Endothelial cell of umbilical vein (primary cell): ENCODE measurements at regions of chr11 and their contacts with region 1.

Region 1: DNA sequence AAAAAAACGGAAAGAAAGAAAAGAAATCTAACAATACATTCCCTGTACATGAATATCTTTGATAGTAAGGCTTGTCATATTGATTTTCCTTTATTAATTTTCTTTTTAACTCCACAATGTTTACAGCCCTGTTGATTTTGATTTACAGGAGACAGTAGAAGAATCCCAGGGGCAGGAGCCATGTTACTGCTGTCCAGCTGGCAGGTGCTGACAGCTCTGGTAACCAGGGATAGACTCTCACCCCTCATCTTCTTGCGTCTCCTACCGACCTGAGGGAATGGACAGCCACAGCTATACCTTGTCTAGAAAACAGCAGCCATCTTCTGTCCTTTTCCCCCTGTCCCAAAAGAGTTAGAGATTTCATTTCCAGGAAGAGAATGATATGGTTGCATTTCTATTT is 37.4 kb downstream of the PRDM10 start:
- DNase-seq: no peak
- H3K4me3 ChIP-seq: no peak overlapping the region
- H3K27ac ChIP-seq: no peak overlapping the region
- H3K4me1 ChIP-seq: peaks cover 10% of the 10 kb centered on the region
- H3K27me3 ChIP-seq: no peaks in the 10 kb centered on the region
- CTCF ChIP-seq: no peak
- POLR2A ChIP-seq: no peak

Region 2: DNA sequence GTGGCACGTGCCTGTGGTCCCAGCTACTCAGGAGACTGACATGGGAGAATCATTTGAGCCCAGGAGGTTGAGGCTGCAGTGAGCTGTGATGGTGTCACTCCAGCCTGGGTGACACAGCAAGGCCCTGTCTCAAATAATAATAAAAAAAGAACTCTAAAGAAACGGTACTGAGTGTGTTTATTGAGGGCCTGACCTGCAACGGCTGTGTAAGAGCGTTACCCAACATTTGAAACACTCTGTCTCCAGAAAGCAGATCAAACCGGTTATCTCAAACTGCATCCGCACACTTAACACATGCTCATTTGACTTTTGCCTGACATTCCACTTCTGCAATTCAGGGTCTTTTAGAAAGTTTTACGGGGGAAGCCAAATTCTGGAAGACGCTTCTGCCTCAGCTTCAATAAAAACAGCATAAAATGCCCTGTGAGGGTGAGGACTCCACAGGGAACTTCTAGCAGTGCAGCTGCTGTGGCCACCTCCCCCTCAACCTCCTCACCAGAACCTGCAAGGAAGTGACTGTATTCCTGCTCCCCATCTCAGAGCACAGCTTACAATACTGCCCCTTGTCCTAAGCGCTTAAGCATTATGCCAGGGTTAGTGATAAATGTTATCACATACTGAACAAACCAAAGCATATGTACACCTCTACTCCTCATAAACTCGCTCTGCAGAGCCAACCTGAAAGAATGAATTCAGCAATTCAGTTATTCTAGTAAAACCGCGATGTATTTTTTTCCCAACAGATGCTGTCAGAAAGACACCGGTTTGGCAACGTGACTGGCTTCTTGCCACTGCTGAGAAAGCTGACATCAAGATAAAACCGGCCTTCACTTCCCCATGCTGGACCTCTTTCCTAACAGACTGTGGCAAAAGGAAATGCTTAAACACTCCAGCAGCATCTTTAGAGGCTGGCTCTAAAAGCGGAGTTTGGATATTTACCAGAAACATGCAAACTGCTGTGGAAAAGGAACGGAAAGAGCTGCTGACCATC is 14.9 kb before region 1 on chr11:
- CTCF ChIA-PET with region 1: interaction called, 6 read pairs
- POLR2A ChIA-PET with region 1: no interaction called
- dilution Hi-C with region 1: no loop called
- intact Hi-C with region 1: loop called (anchors 2 kb)
- DNase-seq: peak; percentile 77
- H3K4me3 ChIP-seq: peak overlapping the region in 1 of 3 experiments; percentile 25
- H3K27ac ChIP-seq: peak overlapping the region; percentile 54
- H3K4me1 ChIP-seq: peaks cover 19% of the 10 kb centered on the region
- H3K27me3 ChIP-seq: no peaks in the 10 kb centered on the region
- CTCF ChIP-seq: no peak
- POLR2A ChIP-seq: no peak